ENCODE measurements at regions of chr1 and their contacts with region 1.

Region 1: DNA sequence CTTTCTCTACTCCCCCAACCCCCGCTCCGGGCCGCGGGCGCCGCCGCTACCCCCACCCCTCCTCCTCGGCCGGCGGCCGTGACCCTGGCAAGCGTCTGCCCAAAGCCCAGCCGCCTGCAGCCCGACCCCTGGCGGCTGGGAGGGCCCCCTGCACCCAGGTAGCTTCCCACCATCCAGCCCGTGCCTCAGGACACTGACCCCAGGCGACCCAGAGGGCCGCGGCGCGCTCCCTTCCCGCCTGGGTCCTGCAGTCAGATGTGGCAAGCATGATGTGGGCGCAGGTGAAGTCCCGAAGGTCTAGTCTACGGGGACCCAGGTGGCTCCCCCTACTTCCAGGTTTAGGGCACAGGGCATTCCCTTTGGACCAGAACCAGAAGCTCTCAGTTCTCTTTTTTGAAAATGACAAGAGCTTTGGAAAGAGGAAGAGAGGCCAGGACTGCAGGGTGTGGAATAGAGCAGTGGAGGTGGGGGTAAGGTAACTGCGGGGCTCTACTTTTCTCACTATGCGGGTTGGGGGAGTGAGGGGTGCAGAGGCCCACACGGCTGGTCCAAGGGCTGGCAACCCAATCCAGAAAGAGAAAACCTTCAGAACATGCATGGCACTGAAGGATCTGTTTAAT is at the start of gene DENND4B:
- DNase-seq: peak; percentile 93
- H3K4me3 ChIP-seq: peak within 1 kb of the TSS; percentile 67 to 98 (median 94)
- H3K27ac ChIP-seq: peak within 1 kb of the TSS; percentile 98 to 100 (median 99)
- H3K4me1 ChIP-seq: peaks cover 0 to 29% (median 19%) of the 10 kb centered on the region in 4 donors
- H3K27me3 ChIP-seq: no peaks in the 10 kb centered on the region
- CTCF ChIP-seq: peak; percentile 77 to 99 (median 86)
- EP300 ChIP-seq: no peak
- POLR2A ChIP-seq: no peak
- total RNA-seq, gene DENND4B: 17.9 to 34.9 (median 23.1) TPM

Region 2: DNA sequence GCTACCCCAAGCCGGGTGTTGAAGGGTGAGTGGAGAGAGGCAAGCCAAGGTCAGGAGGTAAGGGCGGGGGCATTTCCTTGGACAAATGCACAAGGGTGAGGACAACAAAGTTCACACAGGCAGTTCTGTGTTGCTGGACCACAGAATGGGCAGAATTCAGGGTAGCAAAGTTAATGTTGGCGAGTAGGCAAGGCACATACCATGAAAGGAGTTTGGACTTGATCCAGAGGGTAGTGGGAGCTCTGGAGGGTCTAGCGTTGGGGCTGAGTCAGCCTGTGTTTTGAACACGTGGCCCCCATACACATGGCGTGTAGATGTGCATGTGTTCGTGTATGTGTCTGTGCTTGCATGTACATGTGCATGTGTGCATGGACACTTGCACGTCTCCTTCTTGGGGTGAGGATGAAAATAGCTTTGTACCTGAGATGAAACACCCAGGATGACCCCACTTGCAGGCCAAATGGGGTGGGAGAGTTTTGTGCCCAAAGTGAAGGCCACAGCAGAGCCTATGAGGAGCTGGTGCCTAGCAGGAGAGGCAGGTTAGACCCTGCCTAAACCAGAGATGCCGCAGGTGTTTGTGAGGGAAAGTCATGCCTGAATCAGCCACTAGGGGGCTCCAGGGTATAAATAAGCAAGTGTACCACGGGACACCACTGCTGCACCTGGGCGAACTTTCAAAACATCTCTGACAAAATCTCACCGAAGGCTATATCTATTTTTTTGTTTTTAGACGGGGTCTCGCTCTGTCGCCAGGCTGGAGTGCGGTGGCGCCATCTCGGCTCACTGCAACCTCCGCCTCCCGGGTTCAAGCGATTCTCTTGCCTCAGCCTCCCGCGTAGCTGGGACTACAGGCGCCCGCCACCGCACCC is 149.7 kb before region 1 on chr1:
- intact Hi-C with region 1: loop called (anchors 1 kb)
- DNase-seq: peak; percentile 90
- H3K4me3 ChIP-seq: no peak overlapping the region
- H3K27ac ChIP-seq: no peak overlapping the region
- H3K4me1 ChIP-seq: peaks cover 0 to 7% (median 0%) of the 10 kb centered on the region in 4 donors
- H3K27me3 ChIP-seq: peaks cover 0 to 3% (median 0%) of the 10 kb centered on the region in 3 donors
- CTCF ChIP-seq: peak in 3 of 4 experiments; percentile 86 to 91 (median 89)
- EP300 ChIP-seq: no peak
- POLR2A ChIP-seq: no peak

Region 3: GRCh38 chr1:153827168-153827964 is 119.4 kb before region 1 on chr1:
- intact Hi-C with region 1: loop called (anchors 2 kb)
- DNase-seq: no peak
- H3K4me3 ChIP-seq: no peak overlapping the region
- H3K27ac ChIP-seq: no peak overlapping the region
- H3K4me1 ChIP-seq: no peaks in the 10 kb centered on the region
- H3K27me3 ChIP-seq: no peaks in the 10 kb centered on the region
- CTCF ChIP-seq: no peak
- EP300 ChIP-seq: no peak
- POLR2A ChIP-seq: no peak

Region 4: GRCh38 chr1:153984123-153984894 is 37.6 kb after region 1 on chr1:
- intact Hi-C with region 1: loop called (anchors 5 kb)
- DNase-seq: no peak
- H3K4me3 ChIP-seq: peak overlapping the region in 3 of 4 donors; percentile 59 to 64 (median 60)
- H3K27ac ChIP-seq: peak overlapping the region; percentile 86 to 95 (median 92)
- H3K4me1 ChIP-seq: peaks cover 0 to 27% (median 23%) of the 10 kb centered on the region in 4 donors
- H3K27me3 ChIP-seq: no peaks in the 10 kb centered on the region
- CTCF ChIP-seq: no peak
- EP300 ChIP-seq: no peak
- POLR2A ChIP-seq: no peak